ENCODE measurements at regions of chr12 and their contacts with region 1.

Region 1: GRCh38 chr12:94172973-94173372 is 24.6 kb downstream of the PLXNC1 start:
- DNase-seq: peak; percentile 94 to 99 (median 96)
- H3K4me3 ChIP-seq: peak overlapping the region in 1 of 3 experiments; percentile 57
- H3K4me3 Mint-ChIP-seq: peak overlapping the region; percentile 39 to 56
- H3K27ac ChIP-seq: peak overlapping the region; percentile 95 to 97
- H3K27ac Mint-ChIP-seq: peak overlapping the region; percentile 91 to 98 (median 96)
- H3K4me1 ChIP-seq: peaks cover 52 to 53% of the 10 kb centered on the region in 2 donors
- H3K4me1 Mint-ChIP-seq: peaks cover 64% of the 10 kb centered on the region
- H3K27me3 ChIP-seq: no peaks in the 10 kb centered on the region
- H3K27me3 Mint-ChIP-seq: peaks cover 0 to 2% (median 0%) of the 10 kb centered on the region in 3 donors
- CTCF ChIP-seq: no peak

Region 2: GRCh38 chr12:93773122-93773871 is 399.7 kb before region 1 on chr12:
- intact Hi-C with region 1: loop called in 1 of 2 experiments (anchors 5 kb)
- DNase-seq: peak; percentile 89 to 97 (median 92)
- H3K4me3 ChIP-seq: no peak overlapping the region
- H3K4me3 Mint-ChIP-seq: peak overlapping the region in 1 of 2 donors; percentile 7
- H3K27ac ChIP-seq: peak overlapping the region; percentile 21 to 90
- H3K27ac Mint-ChIP-seq: peak overlapping the region; percentile 88 to 98 (median 95)
- H3K4me1 ChIP-seq: peaks cover 35 to 43% of the 10 kb centered on the region in 2 donors
- H3K4me1 Mint-ChIP-seq: peaks cover 42% of the 10 kb centered on the region
- H3K27me3 ChIP-seq: no peaks in the 10 kb centered on the region
- H3K27me3 Mint-ChIP-seq: peaks cover 0 to 10% (median 0%) of the 10 kb centered on the region in 3 donors
- CTCF ChIP-seq: no peak

Region 3: DNA sequence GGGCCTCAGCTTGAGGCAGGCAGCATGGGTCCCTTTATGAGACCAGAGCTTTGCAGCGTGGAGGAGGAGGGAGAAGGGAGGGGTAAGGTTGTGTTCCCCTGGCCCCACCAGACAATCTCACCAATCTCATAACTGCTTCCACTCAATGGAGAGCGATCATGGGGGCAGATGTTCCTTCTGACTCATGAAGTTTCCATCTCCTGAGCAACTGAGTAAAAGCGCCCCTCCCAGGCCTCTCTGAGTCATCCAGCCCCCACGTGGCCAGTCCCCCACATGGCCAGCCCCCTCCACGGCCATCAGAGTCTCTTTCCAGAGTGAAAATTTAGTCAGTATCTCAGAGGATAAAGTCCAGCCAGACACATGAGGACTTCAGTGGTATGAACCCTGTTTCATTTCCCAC is 63.8 kb before region 1 on chr12:
- intact Hi-C with region 1: no loop called
- DNase-seq: no peak
- H3K4me3 ChIP-seq: no peak overlapping the region
- H3K4me3 Mint-ChIP-seq: no peak overlapping the region
- H3K27ac ChIP-seq: no peak overlapping the region
- H3K27ac Mint-ChIP-seq: no peak overlapping the region
- H3K4me1 ChIP-seq: peaks cover 23 to 30% of the 10 kb centered on the region in 2 donors
- H3K4me1 Mint-ChIP-seq: peaks cover 32% of the 10 kb centered on the region
- H3K27me3 ChIP-seq: no peaks in the 10 kb centered on the region
- H3K27me3 Mint-ChIP-seq: peaks cover 2 to 5% (median 3%) of the 10 kb centered on the region in 3 donors
- CTCF ChIP-seq: no peak

Region 4: DNA sequence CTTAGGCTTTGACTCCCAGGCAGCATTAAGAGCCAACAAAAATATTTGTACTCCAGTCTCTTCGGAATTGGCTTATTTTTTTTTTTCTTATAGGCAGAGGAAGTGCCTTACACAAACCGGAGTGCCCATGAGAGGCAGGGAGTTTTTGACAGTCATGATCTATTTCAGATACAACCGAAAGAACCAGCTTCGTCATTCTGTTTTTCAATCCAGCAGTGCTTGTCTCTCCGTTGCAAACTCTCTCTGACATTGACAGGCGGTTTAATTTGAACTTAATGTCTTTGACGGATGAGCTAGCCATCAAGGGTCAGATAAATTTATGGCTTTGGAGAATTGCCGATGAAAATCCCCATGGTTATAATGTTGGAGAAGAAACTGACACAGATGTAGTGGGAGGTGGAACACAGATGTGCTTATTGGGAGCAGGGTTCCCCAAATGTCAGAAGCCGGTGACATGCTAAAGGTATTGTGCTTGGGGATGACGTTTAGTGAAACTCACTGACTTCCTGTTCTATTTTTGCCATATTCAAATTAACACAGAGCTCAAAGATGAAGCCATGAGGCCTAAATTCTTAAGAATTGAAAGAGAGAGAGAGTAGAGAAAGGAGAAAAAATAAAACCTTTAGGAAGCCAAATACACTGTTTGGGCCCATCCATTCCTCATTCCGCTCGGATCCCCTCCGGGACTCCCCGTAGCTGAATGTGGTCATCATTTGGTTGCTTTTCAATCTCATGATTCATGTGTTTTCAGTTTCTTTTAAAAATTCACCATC is 35.1 kb after region 1 on chr12:
- intact Hi-C with region 1: loop called in 1 of 2 experiments (anchors 5 kb)
- DNase-seq: peak; percentile 73 to 94 (median 75)
- H3K4me3 ChIP-seq: peak overlapping the region; percentile 26 to 67 (median 61)
- H3K4me3 Mint-ChIP-seq: peak overlapping the region; percentile 56 to 79
- H3K27ac ChIP-seq: peak overlapping the region; percentile 91 to 99
- H3K27ac Mint-ChIP-seq: peak overlapping the region; percentile 95 to 100 (median 98)
- H3K4me1 ChIP-seq: peaks cover 60 to 61% of the 10 kb centered on the region in 2 donors
- H3K4me1 Mint-ChIP-seq: peaks cover 60% of the 10 kb centered on the region
- H3K27me3 ChIP-seq: no peaks in the 10 kb centered on the region
- H3K27me3 Mint-ChIP-seq: no peaks in the 10 kb centered on the region
- CTCF ChIP-seq: no peak

Region 5: DNA sequence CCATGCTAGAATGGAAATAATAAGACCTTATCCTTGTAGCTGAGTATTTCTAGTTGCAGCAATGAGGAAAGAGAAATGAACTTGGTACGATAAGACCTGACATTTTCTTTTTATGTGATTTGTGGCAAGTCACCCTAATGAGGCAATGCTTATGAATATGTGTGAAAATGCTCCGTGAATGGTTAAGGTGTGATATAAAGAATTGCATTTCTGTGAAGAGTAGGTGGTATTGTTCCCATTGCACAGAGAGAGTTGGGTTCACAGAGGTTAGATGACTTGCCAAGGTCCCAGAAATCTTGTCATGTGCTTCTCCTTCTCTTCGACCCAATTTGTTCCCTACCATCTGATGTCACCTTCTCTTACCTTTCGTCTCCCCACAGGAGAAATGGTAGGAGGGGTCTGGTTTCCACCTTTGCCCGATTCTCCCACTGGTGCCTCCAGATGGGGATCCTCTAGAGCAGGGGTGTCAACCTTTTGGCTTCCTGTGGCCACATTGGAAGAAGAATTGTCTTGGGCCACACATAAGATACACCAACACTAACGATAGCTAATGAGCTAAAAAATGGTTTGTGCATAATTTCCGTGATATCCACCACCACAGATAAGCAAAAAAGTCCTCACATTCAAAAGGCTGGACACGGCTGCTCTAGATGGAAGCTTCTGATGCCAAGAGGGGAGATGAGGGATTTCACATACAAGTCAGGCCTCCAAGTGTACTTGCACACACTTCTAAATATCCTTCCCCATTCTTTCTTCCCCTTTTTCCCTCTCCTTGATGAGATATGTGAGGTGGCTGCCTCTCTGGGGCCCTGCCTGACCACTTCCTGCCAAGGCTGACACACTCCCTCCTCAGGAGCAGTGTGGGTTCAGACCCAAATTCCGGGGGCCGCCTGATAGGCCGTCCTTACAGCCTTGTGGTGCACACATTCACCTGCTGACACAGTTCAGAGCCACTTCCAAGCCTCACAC is 71.5 kb after region 1 on chr12:
- intact Hi-C with region 1: loop called in 1 of 2 experiments (anchors 5 kb)
- DNase-seq: peak; percentile 78 to 91 (median 86)
- H3K4me3 ChIP-seq: peak overlapping the region in 1 of 3 experiments; percentile 47
- H3K4me3 Mint-ChIP-seq: peak overlapping the region in 1 of 2 donors; percentile 31
- H3K27ac ChIP-seq: peak overlapping the region; percentile 39 to 75
- H3K27ac Mint-ChIP-seq: peak overlapping the region; percentile 79 to 93 (median 90)
- H3K4me1 ChIP-seq: peaks cover 55 to 69% of the 10 kb centered on the region in 2 donors
- H3K4me1 Mint-ChIP-seq: peaks cover 76% of the 10 kb centered on the region
- H3K27me3 ChIP-seq: no peaks in the 10 kb centered on the region
- H3K27me3 Mint-ChIP-seq: peaks cover 0 to 8% (median 0%) of the 10 kb centered on the region in 3 donors
- CTCF ChIP-seq: no peak

Region 6: DNA sequence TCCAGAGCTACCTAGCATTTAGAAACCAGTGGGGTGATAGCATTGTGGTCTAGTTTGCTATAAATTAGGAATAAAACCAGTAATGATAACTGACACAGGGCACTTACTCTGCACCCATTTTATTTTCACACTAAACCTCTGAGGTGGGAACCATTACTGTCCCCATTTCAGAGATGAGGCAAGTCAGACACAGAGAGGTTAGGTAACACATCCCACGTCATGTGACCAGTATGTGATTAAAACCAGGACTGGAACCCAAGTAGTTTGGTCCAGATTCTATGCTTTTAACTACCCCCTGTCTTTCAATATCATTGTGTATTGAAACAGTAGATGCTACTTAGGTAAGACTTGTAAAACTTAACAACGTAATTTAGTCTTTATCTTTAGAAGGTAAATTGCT is 85.6 kb after region 1 on chr12:
- intact Hi-C with region 1: no loop called
- DNase-seq: no peak
- H3K4me3 ChIP-seq: no peak overlapping the region
- H3K4me3 Mint-ChIP-seq: no peak overlapping the region
- H3K27ac ChIP-seq: no peak overlapping the region
- H3K27ac Mint-ChIP-seq: no peak overlapping the region
- H3K4me1 ChIP-seq: peaks cover 26 to 30% of the 10 kb centered on the region in 2 donors
- H3K4me1 Mint-ChIP-seq: peaks cover 30% of the 10 kb centered on the region
- H3K27me3 ChIP-seq: no peaks in the 10 kb centered on the region
- H3K27me3 Mint-ChIP-seq: peaks cover 0 to 2% (median 0%) of the 10 kb centered on the region in 3 donors
- CTCF ChIP-seq: no peak

Region 7: DNA sequence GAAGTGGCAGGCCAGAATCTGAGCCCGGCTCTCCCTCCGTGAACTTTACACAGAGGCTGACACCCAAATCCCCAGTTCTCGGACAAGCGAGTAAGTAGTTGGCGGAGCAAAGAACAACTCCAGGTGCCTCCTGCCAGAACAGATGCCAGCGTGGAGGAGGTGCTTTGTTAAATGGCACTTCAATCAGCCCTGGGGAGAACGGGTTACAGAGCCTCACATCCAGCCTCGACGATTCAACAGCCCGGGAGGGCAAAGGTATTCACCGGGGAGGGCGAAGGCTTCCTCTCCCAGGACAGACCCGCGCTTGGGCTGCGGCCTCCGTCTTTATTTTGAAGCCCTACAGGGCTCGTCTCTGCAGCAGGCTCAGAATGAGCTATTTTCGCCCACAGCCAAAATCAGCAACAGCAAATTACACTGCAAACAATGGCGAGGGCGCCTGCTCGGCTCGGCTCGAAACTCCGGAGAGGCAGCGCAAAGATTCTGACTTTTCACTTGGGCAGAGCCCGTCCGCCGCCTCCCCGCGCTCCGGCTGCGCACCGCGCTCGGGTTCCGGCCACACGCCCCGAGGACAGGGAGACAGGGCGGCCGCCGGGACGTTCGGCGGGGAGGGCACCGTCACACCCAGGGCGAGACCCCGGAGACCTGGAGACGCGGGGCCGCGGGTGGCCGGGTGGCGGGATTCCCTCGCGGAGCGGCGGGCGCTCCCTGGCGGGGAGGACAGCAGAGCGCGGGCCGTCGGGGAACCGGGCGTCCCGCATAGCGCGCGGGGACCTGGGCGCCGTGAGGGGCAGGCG is 476.6 kb after region 1 on chr12:
- intact Hi-C with region 1: loop called in 1 of 2 experiments (anchors 10 kb)
- DNase-seq: peak in 2 of 3 donors; percentile 42 to 51
- H3K4me3 ChIP-seq: peak overlapping the region; percentile 36 to 86 (median 58)
- H3K4me3 Mint-ChIP-seq: peak overlapping the region; percentile 93 to 94
- H3K27ac ChIP-seq: peak overlapping the region in 1 of 2 donors; percentile 7
- H3K27ac Mint-ChIP-seq: peak overlapping the region in 6 of 7 donors; percentile 63 to 84 (median 78)
- H3K4me1 ChIP-seq: peaks cover 24 to 32% of the 10 kb centered on the region in 2 donors
- H3K4me1 Mint-ChIP-seq: peaks cover 37% of the 10 kb centered on the region
- H3K27me3 ChIP-seq: peaks cover 35 to 50% of the 10 kb centered on the region in 2 donors
- H3K27me3 Mint-ChIP-seq: peaks cover 53 to 67% (median 58%) of the 10 kb centered on the region in 3 donors
- CTCF ChIP-seq: peak; percentile 69